PC-3 (cell line): ENCODE measurements at regions of chr19 and their contacts with region 1.

Region 1: DNA sequence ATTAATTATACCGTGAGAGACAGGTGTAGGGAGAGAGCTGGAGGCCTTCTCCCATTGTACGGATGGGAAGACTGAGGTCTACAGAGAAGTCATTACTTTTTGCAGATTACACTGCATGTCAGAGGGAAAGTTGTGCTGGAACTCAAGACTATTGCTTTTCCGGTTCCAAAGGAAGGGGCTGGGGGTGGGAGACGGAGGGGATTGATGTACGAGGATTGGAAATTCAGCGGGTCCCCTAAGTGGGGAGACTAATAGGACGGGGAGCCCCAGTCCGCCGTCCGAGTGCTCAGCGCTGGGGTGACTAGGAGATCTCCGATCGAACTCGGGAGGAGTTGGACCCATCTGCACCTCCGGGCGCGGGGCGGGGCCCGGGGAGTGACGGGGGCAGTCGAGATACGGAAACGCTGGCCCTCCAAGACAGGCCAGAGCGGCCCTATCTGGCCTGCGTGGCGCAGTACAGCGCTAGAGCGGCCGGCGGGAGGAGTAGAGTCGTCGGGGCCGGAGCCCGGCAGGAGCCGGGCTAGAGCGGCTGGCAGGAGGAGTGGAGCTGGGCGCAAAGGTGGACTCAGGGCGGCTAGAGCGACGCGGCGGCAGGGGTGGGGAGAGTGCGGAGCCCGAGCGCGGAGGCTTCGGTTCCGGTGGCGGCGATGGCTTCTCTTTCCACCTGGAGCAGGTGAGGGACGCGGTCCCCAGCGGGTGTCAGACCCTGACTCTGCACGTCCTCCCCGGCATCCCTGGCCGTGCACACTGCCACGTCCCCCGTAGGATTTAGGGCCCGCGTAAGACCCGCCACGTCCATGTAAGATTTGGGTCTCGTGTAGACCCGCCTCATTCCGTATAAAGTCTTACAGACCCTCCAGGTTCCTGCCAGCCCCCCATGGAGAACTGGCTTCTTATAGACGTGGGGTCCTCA is 1.1 kb downstream of the ARHGEF1 start:
- DNase-seq: peak; percentile 95
- ATAC-seq: peak; percentile 74
- H3K4me3 ChIP-seq: peak overlapping the region; percentile 98
- H3K27ac ChIP-seq: peak overlapping the region; percentile 25
- H3K4me1 ChIP-seq: peaks cover 32% of the 10 kb centered on the region
- H3K27me3 ChIP-seq: no peaks in the 10 kb centered on the region
- CTCF ChIP-seq: no peak

Region 2: DNA sequence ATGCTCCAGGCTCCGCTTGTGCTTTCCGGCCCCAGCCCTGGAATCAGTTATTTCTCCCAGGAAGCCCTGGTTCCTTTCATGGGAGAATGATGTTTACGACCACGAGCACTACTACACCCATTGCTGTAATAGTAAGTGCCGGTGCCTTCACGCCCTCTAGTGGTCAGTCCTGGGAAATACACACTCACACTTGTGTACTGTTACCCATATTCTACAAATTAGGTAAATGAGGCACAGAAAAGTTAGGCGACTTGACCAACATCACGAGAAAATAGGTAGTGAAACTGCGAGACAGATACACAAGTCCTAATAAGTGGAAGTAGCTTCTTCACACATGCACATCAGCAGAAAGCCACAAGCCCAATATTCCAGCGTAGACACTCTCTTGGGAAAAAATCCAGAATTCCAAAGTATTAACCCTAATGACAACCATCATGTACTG is 286.5 kb before region 1 on chr19:
- CTCF ChIA-PET with region 1: no interaction called
- POLR2A ChIA-PET with region 1: no interaction called
- intact Hi-C with region 1: no loop called
- DNase-seq: peak; percentile 75
- ATAC-seq: peak; percentile 69; the same call in 1 of the 2 replicates
- H3K4me3 ChIP-seq: no peak overlapping the region
- H3K27ac ChIP-seq: no peak overlapping the region
- H3K4me1 ChIP-seq: no peaks in the 10 kb centered on the region
- H3K27me3 ChIP-seq: peaks cover 2% of the 10 kb centered on the region; the same call in 1 of the 2 replicates
- CTCF ChIP-seq: peak; percentile 84

Region 3: DNA sequence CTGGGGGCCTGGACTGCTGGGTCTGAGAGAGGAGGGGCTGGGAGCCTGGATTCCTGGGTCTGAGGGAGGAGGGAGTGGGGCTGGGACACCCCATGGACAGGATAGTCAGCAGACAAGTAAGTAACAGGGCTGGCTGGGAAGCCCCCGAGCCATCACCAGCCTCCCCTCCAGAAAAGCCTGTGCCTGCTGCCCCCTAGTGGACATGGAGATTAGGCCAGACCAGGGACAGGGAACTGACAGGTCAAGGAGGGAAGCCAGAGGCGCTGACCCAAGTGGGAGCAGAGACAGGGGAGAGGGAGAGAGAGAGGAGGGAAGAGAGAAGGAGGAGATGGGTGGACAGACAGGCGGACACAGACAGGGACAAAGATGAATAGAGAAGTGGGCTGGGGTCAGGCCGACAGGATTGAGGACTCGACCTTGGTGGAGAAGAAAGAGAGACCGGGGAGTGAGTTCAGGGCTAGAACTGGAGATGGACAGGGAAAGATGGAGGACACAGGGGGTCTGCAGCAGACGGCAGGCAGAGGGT is 50.8 kb after region 1 on chr19:
- CTCF ChIA-PET with region 1: interaction called, 4 read pairs
- POLR2A ChIA-PET with region 1: no interaction called
- intact Hi-C with region 1: loop called (anchors 5 kb)
- DNase-seq: peak; percentile 65
- ATAC-seq: peak; percentile 63
- H3K4me3 ChIP-seq: no peak overlapping the region
- H3K27ac ChIP-seq: no peak overlapping the region
- H3K4me1 ChIP-seq: 0 out of 2 replicates have a peak, but pooled peaks cover 9% of the 10 kb centered on the region
- H3K27me3 ChIP-seq: 0 out of 2 replicates have a peak, but pooled peaks cover 8% of the 10 kb centered on the region
- CTCF ChIP-seq: peak; percentile 82

Region 4: GRCh38 chr19:41951686-41952172 is 67.7 kb after region 1 on chr19:
- CTCF ChIA-PET with region 1: no interaction called
- POLR2A ChIA-PET with region 1: interaction called, 14 read pairs
- intact Hi-C with region 1: loop called (anchors 5 kb)
- DNase-seq: peak; percentile 87
- ATAC-seq: peak; percentile 90
- H3K4me3 ChIP-seq: no peak overlapping the region
- H3K27ac ChIP-seq: no peak overlapping the region
- H3K4me1 ChIP-seq: no peaks in the 10 kb centered on the region
- H3K27me3 ChIP-seq: no peaks in the 10 kb centered on the region
- CTCF ChIP-seq: peak; percentile 88

Region 5: DNA sequence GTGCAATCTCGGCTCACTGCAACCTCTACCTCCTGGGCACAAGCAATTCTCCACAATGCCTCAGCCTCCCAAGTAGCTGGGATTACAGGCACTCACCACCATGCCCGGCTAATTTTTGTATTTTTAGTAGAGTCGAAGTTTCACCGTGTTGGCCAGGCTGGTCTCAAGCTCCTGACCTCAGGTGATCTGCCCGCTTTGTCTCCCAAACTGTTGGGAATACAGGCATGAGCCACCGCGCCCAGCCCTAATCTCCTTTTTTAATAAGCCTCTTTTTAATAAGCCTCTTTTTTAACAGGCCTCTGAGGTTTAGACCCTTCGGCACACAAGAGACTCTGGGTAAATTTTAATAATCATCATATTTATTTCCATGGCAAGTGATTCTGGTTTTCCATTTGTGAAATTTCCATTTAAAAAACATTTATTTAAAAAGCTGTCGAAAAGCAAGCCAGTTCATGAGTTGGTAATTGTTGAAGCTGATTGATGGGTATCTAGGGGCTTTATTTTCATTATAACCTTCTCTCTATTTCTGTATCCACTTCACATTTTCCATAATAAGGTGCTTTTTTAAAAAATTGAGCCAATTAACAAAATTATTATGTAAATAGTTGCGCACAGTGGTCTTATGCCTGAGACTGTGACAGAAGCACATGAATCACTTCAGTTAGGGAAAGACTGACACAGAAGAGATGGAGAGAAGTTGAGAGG is 236.4 kb after region 1 on chr19:
- CTCF ChIA-PET with region 1: no interaction called
- POLR2A ChIA-PET with region 1: interaction called, 10 read pairs
- intact Hi-C with region 1: no loop called
- DNase-seq: no peak
- ATAC-seq: no peak
- H3K4me3 ChIP-seq: no peak overlapping the region
- H3K27ac ChIP-seq: no peak overlapping the region
- H3K4me1 ChIP-seq: peaks cover 14% of the 10 kb centered on the region
- H3K27me3 ChIP-seq: no peaks in the 10 kb centered on the region
- CTCF ChIP-seq: no peak